ENCODE measurements at regions of chr6 and their contacts with region 1.

Region 1: GRCh38 chr6:31525932-31526591 is 2.7 kb upstream of the MCCD1 start:
- DNase-seq: no peak
- H3K4me3 ChIP-seq: no peak overlapping the region
- H3K27ac ChIP-seq: no peak overlapping the region; the same call in 1 of the 2 replicates
- H3K4me1 ChIP-seq: peaks cover 0 to 5% (median 3%) of the 10 kb centered on the region in 4 experiments; a peak in 3 of 7 replicates
- H3K27me3 ChIP-seq: no peaks in the 10 kb centered on the region
- CTCF ChIP-seq: no peak
- EP300 ChIP-seq: no peak
- POLR2A ChIP-seq: no peak
- RAD21 ChIP-seq: no peak

Region 2: GRCh38 chr6:31493875-31494694 is 32.0 kb before region 1 on chr6:
- CTCF ChIA-PET with region 1: interaction called, 8 read pairs
- POLR2A ChIA-PET with region 1: interaction called, 22 read pairs
- DNase-seq: peak in 1 of 2 experiments; percentile 92
- H3K4me3 ChIP-seq: peak overlapping the region; percentile 48 to 70 (median 64)
- H3K27ac ChIP-seq: no peak overlapping the region
- H3K4me1 ChIP-seq: peaks cover 0 to 12% (median 5%) of the 10 kb centered on the region in 4 experiments; a peak in 6 of 7 replicates
- H3K27me3 ChIP-seq: peaks cover 0 to 15% (median 9%) of the 10 kb centered on the region in 4 experiments; a peak in 6 of 7 replicates
- CTCF ChIP-seq: peak; percentile 81 to 89 (median 81)
- EP300 ChIP-seq: 0 out of 3 replicates have a peak, but pooled peaks of 1 of the 2 experiments have one; percentile 14
- POLR2A ChIP-seq: peak in 1 of 2 experiments; percentile 36; a peak in 1 of 3 replicates
- RAD21 ChIP-seq: peak; percentile 65 to 69

Region 3: GRCh38 chr6:31513456-31514165 is 12.5 kb before region 1 on chr6:
- CTCF ChIA-PET with region 1: interaction called, 8 read pairs
- POLR2A ChIA-PET with region 1: interaction called, 19 read pairs
- DNase-seq: no peak
- H3K4me3 ChIP-seq: no peak overlapping the region
- H3K27ac ChIP-seq: no peak overlapping the region
- H3K4me1 ChIP-seq: no peaks in the 10 kb centered on the region
- H3K27me3 ChIP-seq: no peaks in the 10 kb centered on the region
- CTCF ChIP-seq: no peak
- EP300 ChIP-seq: no peak
- POLR2A ChIP-seq: no peak
- RAD21 ChIP-seq: no peak

Region 4: GRCh38 chr6:31580807-31581433 is 54.9 kb after region 1 on chr6:
- CTCF ChIA-PET with region 1: interaction called, 3 read pairs
- POLR2A ChIA-PET with region 1: interaction called, 10 read pairs
- DNase-seq: peak; percentile 38 to 96
- H3K4me3 ChIP-seq: peak overlapping the region; percentile 54 to 89 (median 80)
- H3K27ac ChIP-seq: no peak overlapping the region
- H3K4me1 ChIP-seq: peaks cover 0 to 6% (median 6%) of the 10 kb centered on the region in 4 experiments; a peak in 6 of 7 replicates
- H3K27me3 ChIP-seq: peaks cover 0 to 8% (median 7%) of the 10 kb centered on the region in 4 experiments; a peak in 5 of 7 replicates
- CTCF ChIP-seq: peak in 2 of 3 experiments; percentile 89 to 93; a peak in 3 of 4 replicates
- EP300 ChIP-seq: no peak
- POLR2A ChIP-seq: 0 out of 3 replicates have a peak, but pooled peaks of 1 of the 2 experiments have one; percentile 18
- RAD21 ChIP-seq: peak; percentile 39 to 66

Measured in H1 (cell line).